Left ventricle myocardium inferior (tissue), 1 donor: ENCODE measurements at regions of chr10 and their contacts with region 1.

Region 1: DNA sequence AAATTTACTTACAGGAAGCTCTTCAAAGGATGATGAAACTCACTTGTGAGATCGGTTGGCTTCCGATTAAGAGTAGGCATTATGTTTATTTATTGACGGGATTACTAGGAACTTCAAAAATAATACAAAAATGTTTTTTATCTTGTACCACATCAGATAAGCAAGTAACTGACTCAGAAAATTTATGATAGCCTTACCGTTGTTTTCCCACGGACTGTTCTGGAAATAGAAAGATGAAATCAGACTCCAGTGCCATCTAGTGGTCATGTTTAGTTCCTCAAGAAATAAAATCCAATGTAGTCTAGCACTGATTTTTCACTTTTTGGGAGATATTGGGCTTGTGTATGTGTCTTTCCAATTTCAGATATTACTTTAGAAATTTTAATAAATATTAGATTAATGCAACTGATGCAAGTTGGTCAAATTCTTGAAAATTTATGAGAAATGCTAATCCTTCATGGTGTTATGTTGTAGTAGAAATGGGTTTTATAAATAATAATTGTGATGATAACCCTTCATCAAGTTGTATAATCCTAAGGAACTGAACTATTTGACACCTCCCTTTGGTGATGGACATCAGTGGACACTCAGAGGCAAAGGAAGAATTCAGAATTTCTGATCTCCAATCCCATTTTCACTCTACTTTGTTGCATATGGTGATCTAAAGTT is 168.8 kb downstream of the TMEM26 start:
- DNase-seq: no peak
- H3K4me3 ChIP-seq: no peak overlapping the region
- H3K27ac ChIP-seq: peak overlapping the region; percentile 7
- H3K4me1 ChIP-seq: no peaks in the 10 kb centered on the region
- H3K27me3 ChIP-seq: no peaks in the 10 kb centered on the region
- CTCF ChIP-seq: peak; percentile 88

Region 2: DNA sequence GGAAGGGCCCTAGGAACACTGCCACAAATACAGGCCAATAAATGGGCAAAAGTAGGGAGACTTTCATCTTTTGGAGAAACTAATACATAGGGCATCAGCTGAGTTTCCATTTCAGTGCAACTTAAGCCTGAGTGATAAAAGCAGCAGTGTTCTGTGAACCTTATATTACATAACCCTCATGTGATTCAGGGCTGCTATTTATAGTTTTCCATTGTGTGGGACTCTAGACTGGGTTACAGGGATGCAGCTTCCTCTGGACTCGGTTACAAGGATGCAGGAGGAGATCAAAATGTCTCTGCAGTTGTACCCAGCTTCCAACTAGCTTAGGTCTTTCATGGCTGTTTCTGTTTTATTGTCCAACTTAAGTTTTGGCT is 473.6 kb before region 1 on chr10:
- intact Hi-C with region 1: loop called (anchors 5 kb)
- DNase-seq: no peak
- H3K4me3 ChIP-seq: no peak overlapping the region
- H3K27ac ChIP-seq: peak overlapping the region; percentile 85
- H3K4me1 ChIP-seq: peaks cover 17% of the 10 kb centered on the region
- H3K27me3 ChIP-seq: no peaks in the 10 kb centered on the region
- CTCF ChIP-seq: no peak

Region 3: DNA sequence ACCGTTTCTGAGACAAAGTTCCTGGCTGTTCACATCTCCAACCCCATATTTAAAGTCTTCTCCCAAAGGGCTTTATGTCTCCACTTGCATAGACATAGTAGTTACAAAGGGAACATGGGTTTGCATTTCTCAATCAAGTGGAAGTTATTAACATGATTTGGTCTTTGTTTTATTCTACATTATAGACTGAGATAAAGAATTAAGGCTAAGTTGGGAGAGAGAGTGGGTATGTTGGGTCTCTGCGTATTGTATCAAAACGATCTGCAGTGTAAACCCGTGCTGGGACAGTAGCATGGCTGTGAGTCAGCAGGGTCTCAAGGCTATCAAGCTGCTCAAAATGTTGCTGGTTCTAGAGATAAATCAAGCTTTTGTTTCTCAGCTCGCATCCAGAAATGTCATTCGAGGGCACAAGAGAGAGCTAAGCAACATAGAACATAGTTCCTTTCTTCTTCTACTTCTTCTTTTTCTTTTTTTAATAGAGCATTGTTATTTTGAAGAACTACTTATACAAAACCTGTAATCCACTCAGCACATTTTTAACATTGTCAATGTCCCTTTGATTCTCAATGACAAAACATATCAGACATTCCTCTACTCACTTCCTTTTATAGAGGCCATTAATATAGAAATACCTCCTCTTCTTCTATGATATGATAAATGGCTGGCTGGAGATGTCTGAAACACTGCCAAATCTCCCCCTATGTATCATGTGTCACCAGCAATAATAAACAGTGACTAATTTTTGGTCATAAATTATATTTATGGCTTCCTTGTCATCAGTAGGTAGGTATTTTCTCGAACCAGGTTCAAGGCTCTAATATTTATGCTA is 305.9 kb before region 1 on chr10:
- intact Hi-C with region 1: loop called (anchors 10 kb)
- DNase-seq: no peak
- H3K4me3 ChIP-seq: no peak overlapping the region
- H3K27ac ChIP-seq: no peak overlapping the region
- H3K4me1 ChIP-seq: peaks cover 16% of the 10 kb centered on the region
- H3K27me3 ChIP-seq: no peaks in the 10 kb centered on the region
- CTCF ChIP-seq: no peak

Region 4: GRCh38 chr10:61125560-61126170 is 158.7 kb before region 1 on chr10:
- intact Hi-C with region 1: no loop called
- DNase-seq: no peak
- H3K4me3 ChIP-seq: no peak overlapping the region
- H3K27ac ChIP-seq: no peak overlapping the region
- H3K4me1 ChIP-seq: peaks cover 11% of the 10 kb centered on the region
- H3K27me3 ChIP-seq: no peaks in the 10 kb centered on the region
- CTCF ChIP-seq: no peak

Region 5: DNA sequence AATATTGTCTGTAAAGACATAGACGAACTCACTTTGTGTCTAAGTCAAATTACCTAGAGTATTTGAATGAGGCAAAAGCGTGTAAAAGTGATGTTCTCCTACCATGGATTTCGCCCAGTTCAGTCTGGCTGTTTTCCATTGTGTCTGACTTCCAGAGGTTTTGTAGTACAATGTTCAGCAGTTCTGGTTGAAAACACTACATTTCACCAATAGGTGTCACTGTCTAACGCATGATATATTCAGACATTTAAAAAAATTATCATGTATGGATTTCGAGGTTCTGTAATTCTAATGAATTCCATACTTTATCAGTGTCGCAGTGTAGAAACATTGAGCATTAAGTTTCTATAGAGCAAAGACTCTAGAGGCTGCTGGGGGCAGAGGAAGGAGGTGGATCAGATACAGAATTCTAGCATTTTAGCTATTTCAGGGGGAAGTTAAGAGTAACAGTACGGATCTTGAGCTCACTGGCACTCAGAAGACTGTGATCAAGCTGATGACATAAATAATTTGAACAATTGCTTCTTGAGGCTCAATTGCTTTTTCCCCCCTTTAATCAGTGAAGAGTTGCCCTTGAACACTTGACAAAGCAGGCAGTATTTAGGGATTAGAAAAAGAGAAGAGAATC is 143.5 kb before region 1 on chr10:
- intact Hi-C with region 1: loop called (anchors 10 kb)
- DNase-seq: no peak
- H3K4me3 ChIP-seq: no peak overlapping the region
- H3K27ac ChIP-seq: no peak overlapping the region
- H3K4me1 ChIP-seq: peaks cover 11% of the 10 kb centered on the region
- H3K27me3 ChIP-seq: no peaks in the 10 kb centered on the region
- CTCF ChIP-seq: peak; percentile 81

Region 6: GRCh38 chr10:61329854-61330253 is 45.5 kb after region 1 on chr10:
- intact Hi-C with region 1: no loop called
- DNase-seq: no peak
- H3K4me3 ChIP-seq: no peak overlapping the region
- H3K27ac ChIP-seq: no peak overlapping the region
- H3K4me1 ChIP-seq: no peaks in the 10 kb centered on the region
- H3K27me3 ChIP-seq: no peaks in the 10 kb centered on the region
- CTCF ChIP-seq: no peak

Region 7: DNA sequence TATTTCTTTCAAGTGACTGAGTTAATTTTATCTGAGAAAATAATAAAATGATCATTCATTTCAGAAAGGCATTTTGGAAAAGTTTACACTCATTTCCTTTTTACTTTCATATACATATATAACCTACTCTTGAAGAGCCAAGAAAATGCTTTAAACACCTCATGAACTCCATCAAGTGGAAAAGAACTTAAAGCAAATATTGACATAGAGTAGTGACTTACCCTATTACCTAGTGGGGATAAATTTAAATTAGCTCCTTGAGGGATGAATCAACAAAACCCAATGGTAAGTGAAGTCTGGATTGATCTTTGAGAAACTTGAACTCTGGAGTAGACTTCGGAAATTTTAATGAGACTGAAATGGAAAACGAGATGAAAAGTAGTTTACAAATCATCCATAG is 80.3 kb after region 1 on chr10:
- intact Hi-C with region 1: no loop called
- DNase-seq: no peak
- H3K4me3 ChIP-seq: no peak overlapping the region
- H3K27ac ChIP-seq: no peak overlapping the region
- H3K4me1 ChIP-seq: no peaks in the 10 kb centered on the region
- H3K27me3 ChIP-seq: no peaks in the 10 kb centered on the region
- CTCF ChIP-seq: no peak